ENCODE measurements at regions of chr15 and their contacts with region 1.

Region 1: DNA sequence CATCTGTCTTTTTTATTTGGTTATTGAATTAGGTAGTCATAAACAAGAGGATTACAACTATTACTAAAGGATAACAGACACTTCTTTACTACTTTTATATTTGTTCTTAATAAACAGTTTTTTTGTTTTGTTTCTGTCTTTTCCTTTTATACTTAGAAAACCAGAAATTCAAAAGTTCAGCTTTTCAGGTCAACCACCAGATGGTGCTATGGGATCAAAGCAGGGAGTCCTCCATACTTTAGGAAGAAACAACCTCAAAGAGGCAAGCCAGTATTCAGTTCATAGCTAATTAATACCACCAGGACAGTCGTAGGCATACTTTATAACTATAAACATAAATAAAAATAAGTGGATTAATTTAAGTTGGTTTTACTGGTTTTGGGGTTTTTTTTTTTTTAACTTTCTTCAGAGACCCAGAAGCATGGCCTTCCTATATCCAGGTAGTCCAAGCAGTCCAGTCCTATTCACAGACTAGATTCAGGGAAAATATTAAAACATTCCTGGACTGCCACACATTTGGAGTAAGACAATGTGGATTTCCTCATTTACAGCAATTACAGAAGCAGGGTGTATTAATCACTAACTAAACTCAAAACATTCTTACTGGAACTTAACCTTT is 16.0 kb upstream of the EID1 start:
- DNase-seq: no peak
- H3K4me3 ChIP-seq: no peak overlapping the region
- H3K27ac ChIP-seq: no peak overlapping the region
- H3K4me1 ChIP-seq: peaks cover 4% of the 10 kb centered on the region
- H3K27me3 ChIP-seq: no peaks in the 10 kb centered on the region
- CTCF ChIP-seq: peak; percentile 73 to 82 (median 79)
- POLR2A ChIP-seq: no peak

Region 2: GRCh38 chr15:48748535-48748934 is 113.4 kb before region 1 on chr15:
- intact Hi-C with region 1: no loop called
- DNase-seq: no peak
- H3K4me3 ChIP-seq: no peak overlapping the region
- H3K27ac ChIP-seq: no peak overlapping the region
- H3K4me1 ChIP-seq: no peaks in the 10 kb centered on the region
- H3K27me3 ChIP-seq: no peaks in the 10 kb centered on the region
- CTCF ChIP-seq: no peak
- POLR2A ChIP-seq: no peak

Region 3: DNA sequence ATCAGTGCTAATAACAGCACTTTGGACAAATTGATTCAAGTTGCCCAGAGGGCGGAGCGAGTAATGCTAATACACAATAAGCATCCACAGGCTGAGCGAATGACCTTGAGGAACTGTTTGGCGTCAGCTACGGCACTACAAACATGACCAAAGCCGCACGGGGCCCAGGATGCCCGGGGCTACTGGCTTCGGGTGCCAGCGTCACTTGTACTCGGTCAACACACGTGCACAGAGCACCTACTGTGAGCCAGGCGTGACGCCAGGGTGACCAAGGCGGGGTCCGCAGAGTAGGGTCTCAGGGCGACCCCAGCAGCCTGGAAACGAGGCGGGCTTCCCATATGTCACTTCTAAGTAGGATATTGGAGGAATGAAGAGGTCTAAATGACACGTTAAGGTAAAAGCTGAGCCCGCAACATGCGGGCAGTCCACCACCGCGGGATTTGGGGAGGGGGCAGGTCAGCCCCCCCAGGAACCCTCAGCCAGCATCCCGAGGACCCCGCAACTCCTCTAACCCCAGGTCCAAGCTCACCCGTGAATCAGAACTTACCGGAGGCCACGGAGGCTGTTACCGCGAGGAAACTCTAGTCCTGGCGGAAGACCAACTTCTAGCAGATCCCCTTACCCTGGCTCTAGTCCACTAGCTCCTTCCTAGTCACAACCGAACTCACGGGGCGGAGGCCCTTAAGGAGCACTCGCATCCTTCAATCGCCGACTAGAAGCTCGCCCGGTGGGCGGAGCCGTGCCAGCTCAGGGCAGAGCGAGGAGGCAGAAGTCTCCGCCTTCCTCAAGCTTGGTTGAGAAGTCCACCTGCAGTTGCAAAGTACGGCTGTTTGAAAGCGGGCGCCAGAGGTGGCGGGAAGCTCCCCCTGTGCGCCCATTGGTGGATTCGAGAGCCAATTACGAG is 51.3 kb before region 1 on chr15 and contains the start of gene CEP152:
- intact Hi-C with region 1: no loop called
- DNase-seq: peak; percentile 98
- H3K4me3 ChIP-seq: peak within 1 kb of the TSS; percentile 76 to 81
- H3K27ac ChIP-seq: peak within 1 kb of the TSS; percentile 68
- H3K4me1 ChIP-seq: peaks cover 19% of the 10 kb centered on the region
- H3K27me3 ChIP-seq: no peaks in the 10 kb centered on the region
- CTCF ChIP-seq: no peak
- POLR2A ChIP-seq: no peak
- total RNA-seq, gene CEP152: 4.4 TPM

Region 4: DNA sequence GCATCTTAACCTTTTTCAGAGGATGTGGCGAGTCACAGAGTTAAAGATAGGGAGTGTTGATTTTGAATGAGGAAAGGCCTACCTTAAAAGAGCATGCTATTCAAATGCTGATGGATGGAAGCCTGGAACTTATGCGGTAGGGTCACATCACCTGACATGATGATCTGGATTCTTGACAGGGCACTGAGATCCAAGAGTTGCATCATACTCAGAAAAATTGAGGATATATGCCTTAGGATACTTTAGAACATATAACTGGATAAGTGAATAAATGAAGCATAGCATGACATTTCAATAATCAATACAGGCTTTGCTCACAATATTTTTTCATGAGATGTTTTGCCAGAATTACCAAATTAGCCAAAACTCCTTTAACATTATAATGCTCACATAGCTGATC is 204.5 kb after region 1 on chr15:
- intact Hi-C with region 1: no loop called
- DNase-seq: no peak
- H3K4me3 ChIP-seq: no peak overlapping the region
- H3K27ac ChIP-seq: no peak overlapping the region
- H3K4me1 ChIP-seq: no peaks in the 10 kb centered on the region
- H3K27me3 ChIP-seq: no peaks in the 10 kb centered on the region
- CTCF ChIP-seq: no peak
- POLR2A ChIP-seq: no peak

Region 5: DNA sequence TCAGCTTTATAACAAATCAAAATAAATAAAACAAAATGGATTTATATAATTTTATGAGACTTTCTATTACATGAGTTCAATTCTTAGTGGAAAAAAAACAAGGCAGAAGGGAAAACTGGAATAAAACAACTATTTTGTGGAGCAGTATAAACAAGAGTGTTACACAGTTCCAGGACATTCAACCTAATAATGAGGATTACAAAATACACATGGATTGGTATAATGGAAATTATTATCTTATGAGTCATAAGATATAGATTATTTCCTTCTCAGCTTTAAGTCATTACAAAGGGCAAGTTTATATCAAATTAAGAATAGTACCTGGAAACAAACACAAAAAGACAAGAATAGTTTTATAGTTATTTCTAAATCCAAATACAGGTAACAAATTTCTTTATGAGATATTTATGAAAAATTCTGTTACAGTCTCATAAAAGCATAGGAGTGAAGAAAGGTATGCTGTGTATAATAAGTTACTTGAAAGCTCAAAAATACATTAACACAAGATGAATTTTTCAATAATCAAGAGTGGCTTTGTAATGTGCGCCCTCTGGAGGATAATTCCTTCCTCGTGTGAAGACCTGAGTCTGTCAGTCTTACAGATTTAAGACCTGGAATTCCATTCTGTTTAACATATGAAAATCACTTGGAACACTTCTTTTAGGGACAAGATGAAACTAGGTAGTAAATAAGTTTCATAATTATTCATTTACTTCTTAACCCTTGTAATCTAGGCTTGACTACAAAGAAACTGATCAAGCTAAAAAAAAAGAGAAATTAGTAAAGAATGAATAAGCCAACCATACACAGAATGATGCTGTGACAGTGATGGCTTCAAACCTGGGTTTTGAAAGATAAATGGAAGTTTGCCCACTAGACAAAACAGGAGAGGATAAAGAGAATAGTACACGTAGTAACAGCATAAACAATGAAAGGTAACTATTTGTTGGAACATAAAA is 284.0 kb after region 1 on chr15:
- intact Hi-C with region 1: loop called (anchors 10 kb)
- DNase-seq: no peak
- H3K4me3 ChIP-seq: no peak overlapping the region
- H3K27ac ChIP-seq: no peak overlapping the region
- H3K4me1 ChIP-seq: peaks cover 51% of the 10 kb centered on the region
- H3K27me3 ChIP-seq: no peaks in the 10 kb centered on the region
- CTCF ChIP-seq: peak in 1 of 3 experiments; percentile 34
- POLR2A ChIP-seq: no peak

Region 6: GRCh38 chr15:49185473-49185872 is 323.6 kb after region 1 on chr15:
- intact Hi-C with region 1: no loop called
- DNase-seq: no peak
- H3K4me3 ChIP-seq: no peak overlapping the region
- H3K27ac ChIP-seq: no peak overlapping the region
- H3K4me1 ChIP-seq: peaks cover 9% of the 10 kb centered on the region
- H3K27me3 ChIP-seq: no peaks in the 10 kb centered on the region
- CTCF ChIP-seq: no peak
- POLR2A ChIP-seq: no peak